Ascending aorta (tissue), 2 donors: ENCODE measurements at regions of chr5 and their contacts with region 1.

Region 1: GRCh38 chr5:174348311-174348981 is 302.9 kb downstream of the NSG2 start:
- DNase-seq: peak in 1 of 2 donors; percentile 74
- H3K4me3 ChIP-seq: no peak overlapping the region
- H3K27ac ChIP-seq: peak overlapping the region; percentile 69 to 81
- H3K4me1 ChIP-seq: peaks cover 0 to 8% of the 10 kb centered on the region in 2 donors
- H3K27me3 ChIP-seq: no peaks in the 10 kb centered on the region
- CTCF ChIP-seq: no peak

Region 2: GRCh38 chr5:174106997-174107655 is 241.3 kb before region 1 on chr5:
- intact Hi-C with region 1: no loop called
- DNase-seq: peak in 1 of 2 donors; percentile 50
- H3K4me3 ChIP-seq: no peak overlapping the region
- H3K27ac ChIP-seq: no peak overlapping the region
- H3K4me1 ChIP-seq: no peaks in the 10 kb centered on the region
- H3K27me3 ChIP-seq: no peaks in the 10 kb centered on the region
- CTCF ChIP-seq: no peak

Region 3: GRCh38 chr5:174413563-174414314 is 65.3 kb after region 1 on chr5:
- intact Hi-C with region 1: loop called (anchors 2 kb)
- DNase-seq: no peak
- H3K4me3 ChIP-seq: no peak overlapping the region
- H3K27ac ChIP-seq: peak overlapping the region; percentile 63 to 66
- H3K4me1 ChIP-seq: peaks cover 0 to 13% of the 10 kb centered on the region in 2 donors
- H3K27me3 ChIP-seq: no peaks in the 10 kb centered on the region
- CTCF ChIP-seq: no peak

Region 4: DNA sequence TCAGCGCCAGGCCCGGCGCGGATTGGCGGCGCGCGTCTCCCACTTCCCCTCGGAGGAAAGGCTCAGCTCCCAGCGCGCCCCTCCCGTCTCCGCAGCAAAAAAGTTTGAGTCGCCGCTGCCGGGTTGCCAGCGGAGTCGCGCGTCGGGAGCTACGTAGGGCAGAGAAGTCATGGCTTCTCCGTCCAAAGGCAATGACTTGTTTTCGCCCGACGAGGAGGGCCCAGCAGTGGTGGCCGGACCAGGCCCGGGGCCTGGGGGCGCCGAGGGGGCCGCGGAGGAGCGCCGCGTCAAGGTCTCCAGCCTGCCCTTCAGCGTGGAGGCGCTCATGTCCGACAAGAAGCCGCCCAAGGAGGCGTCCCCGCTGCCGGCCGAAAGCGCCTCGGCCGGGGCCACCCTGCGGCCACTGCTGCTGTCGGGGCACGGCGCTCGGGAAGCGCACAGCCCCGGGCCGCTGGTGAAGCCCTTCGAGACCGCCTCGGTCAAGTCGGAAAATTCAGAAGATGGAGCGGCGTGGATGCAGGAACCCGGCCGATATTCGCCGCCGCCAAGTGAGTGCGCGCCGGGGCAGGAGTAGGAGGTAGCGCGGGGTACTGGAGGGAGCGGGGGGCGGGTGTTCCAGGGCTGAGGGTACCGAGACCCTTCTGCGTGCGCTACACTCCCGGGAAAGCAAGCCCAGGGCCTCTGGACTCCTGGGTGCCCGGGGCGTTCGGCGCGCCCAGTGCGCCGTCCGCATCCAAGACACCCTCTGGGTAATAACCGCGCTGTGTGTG is 376.2 kb after region 1 on chr5 and contains the start of gene MSX2:
- intact Hi-C with region 1: loop called (anchors 10 kb)
- DNase-seq: peak; percentile 16 to 83
- H3K4me3 ChIP-seq: peak within 1 kb of the TSS; percentile 52 to 82
- H3K27ac ChIP-seq: peak within 1 kb of the TSS; percentile 39 to 59
- H3K4me1 ChIP-seq: no peaks in the 10 kb centered on the region
- H3K27me3 ChIP-seq: peaks cover 21% of the 10 kb centered on the region
- CTCF ChIP-seq: no peak
- total RNA-seq, gene MSX2: not detected